ENCODE measurements at regions of chr3 and their contacts with region 1.

Region 1: DNA sequence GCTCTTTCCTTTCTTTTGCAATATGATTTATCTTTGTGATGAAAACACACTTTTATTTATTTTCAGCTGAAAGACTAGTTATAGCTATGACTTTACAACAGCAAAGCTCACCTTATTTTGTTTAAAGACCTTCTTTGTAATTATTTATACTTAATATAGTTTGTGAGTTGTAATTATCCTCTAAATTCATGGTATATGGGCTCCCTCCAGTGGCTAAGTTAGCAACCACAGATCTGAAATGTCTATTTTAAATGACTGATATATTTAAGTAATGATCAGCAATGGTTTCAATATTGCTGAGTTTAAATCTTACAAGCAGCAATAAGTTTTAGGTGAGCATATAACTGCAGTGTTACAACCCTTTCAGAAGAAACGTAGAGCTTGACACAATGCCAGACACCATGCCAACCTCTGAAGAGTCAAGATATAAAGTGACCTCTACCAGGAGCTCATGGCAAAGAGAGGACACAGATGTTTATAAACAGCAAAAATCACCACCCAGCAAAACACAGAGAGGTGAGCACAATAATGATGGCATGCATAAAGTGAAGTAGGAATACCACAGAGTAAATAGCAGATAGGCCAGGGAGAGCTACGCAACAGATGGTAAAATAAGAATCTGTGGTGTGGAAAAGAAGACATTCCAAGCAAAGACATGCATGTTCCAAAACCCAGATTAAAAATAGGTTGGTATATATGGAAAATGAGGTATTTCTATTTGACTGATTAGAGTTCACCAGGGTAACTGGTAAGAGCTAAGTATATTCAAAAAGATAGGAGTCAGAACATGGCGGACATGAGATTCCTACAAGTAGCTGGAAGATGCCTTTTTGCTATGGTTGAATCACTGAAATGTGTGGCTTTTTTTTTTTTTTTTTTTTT is 143.7 kb upstream of the ZNF385D start:
- DNase-seq: peak in 1 of 4 donors; percentile 43
- ATAC-seq: no peak
- H3K4me3 ChIP-seq: no peak overlapping the region
- H3K27ac ChIP-seq: no peak overlapping the region
- H3K4me1 ChIP-seq: no peaks in the 10 kb centered on the region
- H3K27me3 ChIP-seq: no peaks in the 10 kb centered on the region
- CTCF ChIP-seq: peak; percentile 35 to 45

Region 2: DNA sequence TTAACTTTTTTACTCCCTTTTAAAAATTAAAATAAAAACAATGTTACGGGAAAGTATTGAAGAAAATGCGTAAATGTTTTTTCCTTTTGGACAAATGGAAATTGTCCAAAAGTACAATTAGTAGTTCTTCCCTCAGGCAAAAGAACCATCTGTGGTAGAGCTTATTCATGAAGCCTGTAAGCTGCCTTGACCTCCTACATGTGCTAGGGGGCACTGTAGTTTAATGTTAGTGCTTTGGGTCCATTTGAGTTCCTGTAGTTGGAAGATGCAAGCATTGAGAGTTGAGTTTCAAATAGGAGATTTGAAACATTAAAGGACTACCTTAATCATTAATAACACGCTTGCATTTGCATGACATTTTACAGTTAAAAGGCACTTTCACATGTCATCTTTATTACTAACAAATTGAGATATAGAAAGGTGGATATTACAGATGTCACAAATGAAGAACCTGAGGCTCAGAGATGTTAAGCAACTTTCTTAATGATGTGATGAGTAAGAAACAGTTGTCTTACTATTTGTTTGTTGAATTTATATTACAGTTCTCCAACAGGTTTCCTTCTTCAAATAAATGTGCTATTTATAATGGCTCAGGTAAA is 141.9 kb before region 1 on chr3:
- intact Hi-C with region 1: loop called in 1 of 2 experiments (anchors 10 kb)
- DNase-seq: peak in 2 of 4 donors; percentile 35 to 65
- ATAC-seq: peak; percentile 80
- H3K4me3 ChIP-seq: no peak overlapping the region
- H3K27ac ChIP-seq: no peak overlapping the region
- H3K4me1 ChIP-seq: no peaks in the 10 kb centered on the region
- H3K27me3 ChIP-seq: peaks cover 0 to 32% of the 10 kb centered on the region in 2 donors
- CTCF ChIP-seq: peak; percentile 36 to 55

Region 3: GRCh38 chr3:21795152-21795837 is 99.4 kb before region 1 on chr3:
- intact Hi-C with region 1: no loop called
- DNase-seq: peak in 1 of 4 donors; percentile 21
- ATAC-seq: no peak
- H3K4me3 ChIP-seq: no peak overlapping the region
- H3K27ac ChIP-seq: no peak overlapping the region
- H3K4me1 ChIP-seq: peaks cover 0 to 3% of the 10 kb centered on the region in 2 donors
- H3K27me3 ChIP-seq: no peaks in the 10 kb centered on the region
- CTCF ChIP-seq: no peak

Region 4: DNA sequence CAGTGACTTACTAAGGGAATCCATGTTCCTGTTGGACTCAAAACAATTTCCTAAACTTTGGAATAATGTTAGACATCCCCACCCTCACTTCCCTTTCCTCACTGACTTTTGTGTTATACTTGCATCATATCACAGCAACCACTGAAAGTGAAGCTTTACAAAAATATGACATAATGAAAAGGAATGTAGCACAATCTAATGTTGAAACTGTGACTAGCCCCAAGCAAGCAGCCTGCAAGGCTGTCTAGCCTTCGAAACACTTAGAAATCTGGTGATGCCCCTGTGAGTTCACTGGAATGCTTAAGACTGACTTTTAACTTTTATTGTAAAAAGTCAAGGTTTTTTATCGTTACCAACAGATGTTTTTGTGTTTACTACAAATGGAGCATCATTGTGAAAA is 60.0 kb after region 1 on chr3:
- intact Hi-C with region 1: no loop called
- DNase-seq: no peak
- ATAC-seq: no peak
- H3K4me3 ChIP-seq: no peak overlapping the region
- H3K27ac ChIP-seq: no peak overlapping the region
- H3K4me1 ChIP-seq: no peaks in the 10 kb centered on the region
- H3K27me3 ChIP-seq: no peaks in the 10 kb centered on the region
- CTCF ChIP-seq: no peak

Measured in left lung (tissue), 14 donors.